Calu3 (cell line): ENCODE measurements at regions of chr2 and their contacts with region 1.

Region 1: GRCh38 chr2:199085261-199085660 is 372.5 kb downstream of the SATB2 start:
- DNase-seq: peak; percentile 36
- H3K4me3 Mint-ChIP-seq: peak overlapping the region; percentile 10
- H3K27ac Mint-ChIP-seq: peak overlapping the region; percentile 40
- H3K4me1 Mint-ChIP-seq: peaks cover 24% of the 10 kb centered on the region
- H3K27me3 Mint-ChIP-seq: no peaks in the 10 kb centered on the region
- CTCF ChIP-seq: no peak

Region 2: GRCh38 chr2:199160677-199161465 is 75.6 kb after region 1 on chr2:
- CTCF ChIA-PET with region 1: no interaction called
- intact Hi-C with region 1: loop called (anchors 5 kb)
- DNase-seq: peak; percentile 27
- H3K4me3 Mint-ChIP-seq: peak overlapping the region; percentile 36
- H3K27ac Mint-ChIP-seq: peak overlapping the region; percentile 78
- H3K4me1 Mint-ChIP-seq: peaks cover 26% of the 10 kb centered on the region
- H3K27me3 Mint-ChIP-seq: no peaks in the 10 kb centered on the region
- CTCF ChIP-seq: no peak